Natural killer cell (primary cell): ENCODE measurements at regions of chr18 and their contacts with region 1.

Region 1: DNA sequence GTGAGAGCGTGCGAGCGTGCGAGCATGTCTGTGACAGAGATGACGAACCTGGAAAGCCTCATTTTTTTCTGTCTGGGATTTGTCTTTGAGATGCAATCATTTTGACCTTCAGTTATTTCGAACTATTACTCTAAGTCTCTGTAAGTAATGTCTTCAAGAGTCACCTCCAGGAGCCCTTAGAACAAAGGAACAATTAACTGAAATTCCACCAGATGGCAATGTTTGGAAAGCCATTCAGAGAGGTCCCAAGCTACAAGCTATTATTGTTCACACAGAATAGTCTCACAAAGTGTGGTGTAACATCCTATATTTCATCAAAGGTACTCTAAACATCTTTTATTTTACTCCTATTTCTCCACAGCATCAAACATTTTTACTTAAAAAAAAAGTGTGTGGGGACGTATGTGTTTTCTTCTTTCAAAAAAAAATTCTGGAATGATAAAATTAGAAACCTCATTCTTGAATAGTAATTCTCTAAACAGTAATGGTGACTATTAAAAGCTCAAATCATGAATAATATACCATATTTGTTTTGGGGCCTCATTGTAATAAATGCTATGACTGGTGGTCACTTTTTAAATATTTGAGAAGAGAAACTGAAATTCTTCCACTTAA is 35.1 kb upstream of the MAPRE2 start:
- DNase-seq: peak in 1 of 2 donors; percentile 77
- ATAC-seq: peak; percentile 83 to 99 (median 87)
- H3K4me3 ChIP-seq: no peak overlapping the region
- H3K4me3 Mint-ChIP-seq: no peak overlapping the region
- H3K27ac ChIP-seq: no peak overlapping the region
- H3K27ac Mint-ChIP-seq: no peak overlapping the region
- H3K4me1 ChIP-seq: no peaks in the 10 kb centered on the region
- H3K4me1 Mint-ChIP-seq: no peaks in the 10 kb centered on the region
- H3K27me3 ChIP-seq: no peaks in the 10 kb centered on the region
- H3K27me3 Mint-ChIP-seq: no peaks in the 10 kb centered on the region
- CTCF ChIP-seq: peak; percentile 62

Region 2: DNA sequence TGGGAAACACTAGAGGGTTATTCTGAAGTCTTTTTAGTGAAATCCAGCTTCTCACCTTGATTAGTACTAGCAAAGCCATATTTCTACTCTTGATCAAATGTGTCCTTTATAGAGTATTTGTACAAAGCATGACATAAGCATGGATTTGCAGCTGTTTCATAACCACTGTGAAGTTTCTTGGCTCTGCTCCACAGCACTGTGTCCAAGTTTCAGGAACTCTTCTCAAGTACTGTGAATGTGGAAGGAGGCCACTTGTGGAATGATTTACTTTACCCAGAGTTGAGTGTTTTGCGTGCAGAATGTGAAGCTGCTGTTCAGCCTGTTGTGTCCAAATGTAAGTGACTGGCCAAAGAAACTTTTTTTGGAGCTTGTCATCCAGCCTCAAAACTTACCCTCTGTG is 18.9 kb after region 1 on chr18:
- intact Hi-C with region 1: no loop called
- DNase-seq: no peak
- ATAC-seq: no peak
- H3K4me3 ChIP-seq: no peak overlapping the region
- H3K4me3 Mint-ChIP-seq: no peak overlapping the region
- H3K27ac ChIP-seq: no peak overlapping the region
- H3K27ac Mint-ChIP-seq: no peak overlapping the region
- H3K4me1 ChIP-seq: peaks cover 7% of the 10 kb centered on the region
- H3K4me1 Mint-ChIP-seq: peaks cover 20 to 31% of the 10 kb centered on the region in 2 donors
- H3K27me3 ChIP-seq: no peaks in the 10 kb centered on the region
- H3K27me3 Mint-ChIP-seq: no peaks in the 10 kb centered on the region
- CTCF ChIP-seq: no peak

Region 3: GRCh38 chr18:35155398-35156117 is 149.5 kb after region 1 on chr18:
- intact Hi-C with region 1: no loop called
- DNase-seq: peak in 1 of 2 donors; percentile 51
- ATAC-seq: peak; percentile 37 to 73 (median 67)
- H3K4me3 ChIP-seq: no peak overlapping the region
- H3K4me3 Mint-ChIP-seq: peak overlapping the region; percentile 72
- H3K27ac ChIP-seq: peak overlapping the region; percentile 26
- H3K27ac Mint-ChIP-seq: peak overlapping the region; percentile 92
- H3K4me1 ChIP-seq: peaks cover 54% of the 10 kb centered on the region
- H3K4me1 Mint-ChIP-seq: peaks cover 77 to 81% of the 10 kb centered on the region in 2 donors
- H3K27me3 ChIP-seq: no peaks in the 10 kb centered on the region
- H3K27me3 Mint-ChIP-seq: no peaks in the 10 kb centered on the region
- CTCF ChIP-seq: no peak

Region 4: GRCh38 chr18:35355140-35355618 is 349.1 kb after region 1 on chr18:
- intact Hi-C with region 1: loop called (anchors 1 kb)
- DNase-seq: peak; percentile 49 to 83
- ATAC-seq: peak; percentile 88 to 100 (median 99)
- H3K4me3 ChIP-seq: no peak overlapping the region
- H3K4me3 Mint-ChIP-seq: no peak overlapping the region
- H3K27ac ChIP-seq: no peak overlapping the region
- H3K27ac Mint-ChIP-seq: no peak overlapping the region
- H3K4me1 ChIP-seq: peaks cover 4% of the 10 kb centered on the region
- H3K4me1 Mint-ChIP-seq: no peaks in the 10 kb centered on the region
- H3K27me3 ChIP-seq: no peaks in the 10 kb centered on the region
- H3K27me3 Mint-ChIP-seq: peaks cover 0 to 6% of the 10 kb centered on the region in 2 donors
- CTCF ChIP-seq: peak; percentile 66